ENCODE measurements at regions of chr21 and their contacts with region 1.

Region 1: GRCh38 chr21:37463083-37463801 is 96.7 kb downstream of the DYRK1A start:
- DNase-seq: peak; percentile 20
- CTCF ChIP-seq: peak; percentile 40

Region 2: GRCh38 chr21:37348664-37349063 is 114.6 kb before region 1 on chr21:
- CTCF ChIA-PET with region 1: no interaction called
- POLR2A ChIA-PET with region 1: no interaction called
- DNase-seq: no peak
- CTCF ChIP-seq: no peak

Region 3: GRCh38 chr21:37435120-37435519 is 28.1 kb before region 1 on chr21:
- CTCF ChIA-PET with region 1: interaction called, 12 read pairs
- POLR2A ChIA-PET with region 1: no interaction called
- DNase-seq: no peak
- CTCF ChIP-seq: no peak

Region 4: GRCh38 chr21:37452227-37452626 is 11.0 kb before region 1 on chr21:
- CTCF ChIA-PET with region 1: interaction called, 31 read pairs
- POLR2A ChIA-PET with region 1: no interaction called
- DNase-seq: no peak
- CTCF ChIP-seq: no peak

Region 5: DNA sequence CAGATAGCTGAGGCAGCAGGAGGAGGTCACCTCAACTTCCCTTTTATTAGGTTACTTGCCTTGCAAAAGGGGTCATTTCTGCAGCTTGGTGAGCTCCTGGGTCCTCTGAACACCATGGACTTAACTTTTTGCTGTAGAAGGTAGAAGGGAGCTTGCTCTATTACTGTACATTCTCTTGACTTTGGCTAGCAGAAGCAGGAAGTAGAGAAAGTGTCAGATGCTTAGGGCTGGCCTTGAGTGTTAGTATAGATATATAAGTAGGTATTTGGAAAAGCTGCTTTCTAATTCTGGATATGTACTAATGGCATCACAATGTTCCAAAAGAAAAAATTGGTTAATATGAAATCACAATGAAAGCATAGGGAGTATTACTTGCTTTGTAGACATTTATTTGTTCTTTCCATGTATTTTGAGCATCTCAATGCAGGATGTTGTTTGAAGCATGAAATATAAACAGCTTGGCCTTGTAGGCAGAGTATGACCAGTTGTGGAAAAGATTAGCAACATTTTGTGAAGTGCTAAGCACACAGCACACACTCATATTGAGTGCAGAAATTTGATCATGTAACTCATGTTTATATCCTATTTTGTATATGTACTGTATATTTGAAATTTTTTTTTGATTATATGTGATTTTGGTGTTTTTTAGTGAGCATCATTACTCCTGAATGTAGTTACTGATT is 12.1 kb after region 1 on chr21:
- CTCF ChIA-PET with region 1: interaction called, 46 read pairs
- POLR2A ChIA-PET with region 1: no interaction called
- DNase-seq: no peak
- CTCF ChIP-seq: no peak